Sigmoid colon (tissue), 7 donors: ENCODE measurements at regions of chr10 and their contacts with region 1.

Region 1: DNA sequence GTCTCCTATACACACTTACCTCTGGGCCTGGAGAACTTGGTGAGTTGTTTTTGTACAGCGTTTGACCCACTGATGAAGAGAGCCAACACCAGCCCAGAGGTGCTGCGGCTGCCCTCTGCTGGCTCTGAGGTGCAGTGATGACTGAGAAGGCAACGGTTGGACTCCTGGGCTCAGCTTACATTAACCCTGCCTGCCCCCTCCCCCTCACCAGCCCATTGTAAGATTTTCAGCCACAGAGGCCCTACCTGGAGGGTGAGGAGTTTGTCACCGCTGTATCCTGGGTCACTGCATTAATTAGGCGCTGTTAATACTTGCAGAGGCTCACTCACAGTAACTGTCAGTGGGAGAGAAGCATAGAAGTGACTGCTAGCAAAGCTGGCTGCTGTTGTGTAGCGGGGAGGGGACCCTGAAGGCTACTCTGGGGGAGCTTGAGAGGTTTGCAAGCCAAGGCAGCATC is 19.0 kb upstream of the ANKRD2 start:
- DNase-seq: peak; percentile 82
- H3K4me3 ChIP-seq: no peak overlapping the region
- H3K27ac ChIP-seq: no peak overlapping the region
- H3K4me1 ChIP-seq: peaks cover 0 to 21% (median 11%) of the 10 kb centered on the region in 4 donors
- H3K27me3 ChIP-seq: no peaks in the 10 kb centered on the region
- CTCF ChIP-seq: peak; percentile 75 to 90 (median 78)
- EP300 ChIP-seq: no peak
- POLR2A ChIP-seq: no peak

Region 2: DNA sequence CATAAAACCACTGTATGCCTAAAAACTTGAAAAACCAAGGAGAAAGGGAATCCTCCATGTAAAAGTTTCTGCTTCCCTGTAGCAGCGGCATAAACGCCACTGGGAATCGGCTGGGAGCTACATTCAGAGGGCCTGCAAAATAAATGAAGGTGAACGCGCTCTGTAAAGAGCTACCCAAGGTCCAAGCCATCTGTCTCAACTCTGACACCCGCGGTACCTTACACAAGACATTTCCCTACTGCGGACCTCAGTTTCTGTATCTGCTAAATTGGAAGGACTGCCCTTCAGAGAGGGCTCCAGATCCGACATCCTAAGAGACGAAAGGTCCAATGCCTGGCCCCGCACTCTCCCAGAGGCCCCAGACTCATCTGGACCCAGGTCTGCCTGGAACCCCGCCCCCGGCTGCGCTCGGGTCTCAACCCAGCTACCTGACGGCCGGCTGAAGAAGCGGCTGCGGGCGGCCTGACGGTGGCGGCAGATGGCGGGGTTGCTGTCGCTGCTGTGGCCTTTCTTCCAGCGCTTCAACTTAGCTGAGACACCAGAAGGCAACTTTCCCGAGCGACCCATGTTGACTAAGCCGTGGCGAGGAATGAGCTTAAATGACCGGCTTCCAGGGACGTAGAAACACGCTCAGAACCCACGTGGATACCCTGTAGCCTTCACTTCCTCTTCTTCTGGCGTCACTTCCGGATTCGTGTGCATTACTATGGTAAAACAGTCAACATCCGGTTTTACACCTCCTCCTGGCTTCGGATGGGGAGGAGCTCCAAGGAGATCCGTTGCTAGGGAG is 152.7 kb before region 1 on chr10 and contains the start of gene RRP12:
- intact Hi-C with region 1: loop called (anchors 5 kb)
- DNase-seq: peak; percentile 95
- H3K4me3 ChIP-seq: peak within 1 kb of the TSS; percentile 37 to 86 (median 74)
- H3K27ac ChIP-seq: peak within 1 kb of the TSS; percentile 65 to 82 (median 72)
- H3K4me1 ChIP-seq: peaks cover 0 to 19% (median 17%) of the 10 kb centered on the region in 4 donors
- H3K27me3 ChIP-seq: no peaks in the 10 kb centered on the region
- CTCF ChIP-seq: no peak
- EP300 ChIP-seq: peak in 1 of 4 donors; percentile 6
- POLR2A ChIP-seq: no peak
- total RNA-seq, gene RRP12: 5.9 to 17.4 (median 9.8) TPM

Region 3: GRCh38 chr10:97463363-97464132 is 90.1 kb before region 1 on chr10:
- intact Hi-C with region 1: loop called (anchors 1 kb)
- DNase-seq: no peak
- H3K4me3 ChIP-seq: no peak overlapping the region
- H3K27ac ChIP-seq: peak overlapping the region in 2 of 4 donors; percentile 26 to 35
- H3K4me1 ChIP-seq: no peaks in the 10 kb centered on the region
- H3K27me3 ChIP-seq: no peaks in the 10 kb centered on the region
- CTCF ChIP-seq: peak; percentile 57 to 86 (median 78)
- EP300 ChIP-seq: no peak
- POLR2A ChIP-seq: no peak